Activated CD4-positive, alpha-beta T cell treated with anti-CD3 and anti-CD28 coated beads for 36 hours (primary cell): ENCODE measurements at regions of chr22 and their contacts with region 1.

Region 1: GRCh38 chr22:40856513-40857308 is at the starts of genes ST13 and XPNPEP3:
- DNase-seq: peak; percentile 98
- ATAC-seq: peak; percentile 96
- H3K4me3 Mint-ChIP-seq: peak within 1 kb of the TSS; percentile 97
- H3K27ac Mint-ChIP-seq: peak within 1 kb of the TSS; percentile 99
- H3K4me1 Mint-ChIP-seq: peaks cover 53% of the 10 kb centered on the region
- H3K27me3 Mint-ChIP-seq: no peaks in the 10 kb centered on the region
- total RNA-seq, gene ST13: 260 to 297 TPM
- total RNA-seq, gene XPNPEP3: 21.5 to 25.8 TPM

Region 2: DNA sequence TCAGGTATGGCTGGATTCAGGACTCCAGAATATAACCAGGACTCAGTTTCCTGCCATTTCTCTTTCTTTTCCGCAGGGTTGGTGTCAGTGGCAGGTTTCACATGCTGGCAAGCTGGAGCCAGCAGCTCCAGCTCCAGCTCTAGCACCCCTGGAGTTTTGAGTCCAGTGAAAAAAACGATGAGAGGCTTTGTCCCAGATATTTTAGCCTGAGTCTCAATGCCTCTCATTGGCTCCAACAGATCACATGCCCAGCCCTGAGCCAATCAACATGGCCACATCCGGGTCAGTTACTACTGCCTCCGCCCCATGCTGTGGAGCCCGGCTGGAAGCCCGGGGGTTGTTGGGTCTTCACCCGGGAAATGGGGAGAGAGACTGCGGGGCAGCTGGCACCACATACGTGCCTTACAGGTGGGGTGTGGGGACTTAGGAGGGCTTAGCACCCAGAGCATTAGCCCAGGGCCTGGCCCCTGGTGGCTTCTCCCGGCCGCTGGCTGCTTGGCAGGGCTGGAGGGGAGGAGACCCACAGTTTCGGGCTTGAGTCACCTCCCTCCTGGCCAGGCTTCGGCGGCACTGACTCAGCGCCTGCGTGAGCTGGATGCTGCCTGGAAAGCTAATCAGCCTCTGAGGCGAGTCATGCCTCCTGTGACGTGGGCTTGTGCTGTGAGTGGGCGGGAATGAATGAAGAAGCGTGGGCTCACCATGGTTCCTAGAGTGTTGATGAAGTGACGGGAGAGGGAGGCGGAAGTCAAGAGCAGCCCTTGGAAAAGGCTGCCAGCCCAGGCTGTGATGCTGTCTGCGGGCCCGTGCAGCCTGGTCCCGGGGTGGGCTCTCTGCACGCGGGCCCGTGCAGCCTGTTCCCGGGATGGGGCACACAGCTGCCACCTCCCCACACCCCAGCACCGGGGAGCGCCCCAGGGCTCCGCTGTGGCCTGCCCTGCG is 204.9 kb before region 1 on chr22:
- CTCF ChIA-PET with region 1: no interaction called
- POLR2A ChIA-PET with region 1: no interaction called
- intact Hi-C with region 1: loop called in 1 of 2 experiments (anchors 1 kb)
- DNase-seq: peak; percentile 97
- ATAC-seq: peak; percentile 99
- H3K4me3 Mint-ChIP-seq: peak overlapping the region; percentile 64
- H3K27ac Mint-ChIP-seq: peak overlapping the region; percentile 88
- H3K4me1 Mint-ChIP-seq: peaks cover 21% of the 10 kb centered on the region
- H3K27me3 Mint-ChIP-seq: no peaks in the 10 kb centered on the region

Region 3: GRCh38 chr22:40818747-40819598 is 37.7 kb before region 1 on chr22 and contains the start of gene SLC25A17:
- CTCF ChIA-PET with region 1: interaction called, 4 read pairs
- POLR2A ChIA-PET with region 1: interaction called, 3 read pairs
- intact Hi-C with region 1: loop called (anchors 1 kb)
- DNase-seq: peak; percentile 93
- ATAC-seq: peak; percentile 93
- H3K4me3 Mint-ChIP-seq: peak within 1 kb of the TSS; percentile 88
- H3K27ac Mint-ChIP-seq: peak within 1 kb of the TSS; percentile 92
- H3K4me1 Mint-ChIP-seq: peaks cover 30% of the 10 kb centered on the region
- H3K27me3 Mint-ChIP-seq: no peaks in the 10 kb centered on the region
- total RNA-seq, gene SLC25A17: 23.3 to 29.7 TPM

Region 4: DNA sequence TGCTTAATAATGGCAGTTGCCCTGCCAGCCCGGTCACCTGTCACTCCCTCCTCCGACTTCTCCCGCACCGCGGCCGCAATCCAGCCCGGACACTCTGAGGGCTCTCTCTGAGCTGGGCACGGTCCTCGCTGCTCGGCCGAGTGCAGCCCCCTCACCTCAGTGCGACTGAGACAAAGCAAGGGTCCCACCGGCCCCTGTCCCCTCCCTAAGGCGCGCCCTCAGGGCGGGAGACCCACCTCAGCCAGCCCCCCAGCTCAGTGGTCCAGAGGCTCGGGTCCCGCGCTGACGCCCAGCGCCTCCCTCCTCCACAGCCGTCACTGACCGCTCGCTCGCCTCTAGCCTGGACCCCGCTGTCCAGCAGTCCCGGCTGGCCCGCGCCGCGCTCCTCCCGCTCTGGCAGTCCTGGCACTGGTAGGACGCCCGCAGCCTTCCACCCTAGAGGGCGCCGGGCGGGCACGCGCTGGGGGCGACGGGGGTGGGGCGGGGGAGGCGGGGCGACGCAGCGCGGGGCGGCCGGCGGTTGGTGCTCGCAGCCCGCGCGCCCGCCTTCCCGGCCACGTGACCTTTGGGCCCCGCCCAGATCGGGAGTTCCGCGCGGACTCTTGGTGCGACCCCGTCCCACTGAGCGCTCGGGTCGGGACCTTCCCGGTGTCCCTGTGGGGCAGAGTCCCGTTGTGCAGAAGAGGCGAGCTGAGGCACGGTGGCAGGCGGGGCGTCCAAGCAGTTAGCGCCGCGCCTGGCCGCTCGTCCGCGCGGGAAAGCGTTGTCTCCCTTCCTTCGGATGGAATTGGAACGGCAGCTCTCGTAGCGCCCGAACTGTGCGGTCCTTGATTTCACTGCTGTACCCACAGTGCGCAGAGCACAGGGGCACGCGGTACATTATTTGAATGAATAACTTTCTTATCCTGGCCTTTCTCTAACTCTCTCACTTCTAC is 340.6 kb after region 1 on chr22:
- CTCF ChIA-PET with region 1: no interaction called
- POLR2A ChIA-PET with region 1: no interaction called
- intact Hi-C with region 1: loop called in 1 of 2 experiments (anchors 2 kb)
- DNase-seq: peak; percentile 89
- ATAC-seq: peak; percentile 82
- H3K4me3 Mint-ChIP-seq: peak overlapping the region; percentile 77
- H3K27ac Mint-ChIP-seq: no peak overlapping the region
- H3K4me1 Mint-ChIP-seq: peaks cover 11% of the 10 kb centered on the region
- H3K27me3 Mint-ChIP-seq: no peaks in the 10 kb centered on the region

Region 5: GRCh38 chr22:41425660-41426365 is 569.1 kb after region 1 on chr22:
- CTCF ChIA-PET with region 1: no interaction called
- POLR2A ChIA-PET with region 1: no interaction called
- intact Hi-C with region 1: no loop called
- DNase-seq: peak; percentile 72
- ATAC-seq: peak; percentile 90
- H3K4me3 Mint-ChIP-seq: no peak overlapping the region
- H3K27ac Mint-ChIP-seq: peak overlapping the region; percentile 79
- H3K4me1 Mint-ChIP-seq: peaks cover 14% of the 10 kb centered on the region
- H3K27me3 Mint-ChIP-seq: no peaks in the 10 kb centered on the region

Region 6: DNA sequence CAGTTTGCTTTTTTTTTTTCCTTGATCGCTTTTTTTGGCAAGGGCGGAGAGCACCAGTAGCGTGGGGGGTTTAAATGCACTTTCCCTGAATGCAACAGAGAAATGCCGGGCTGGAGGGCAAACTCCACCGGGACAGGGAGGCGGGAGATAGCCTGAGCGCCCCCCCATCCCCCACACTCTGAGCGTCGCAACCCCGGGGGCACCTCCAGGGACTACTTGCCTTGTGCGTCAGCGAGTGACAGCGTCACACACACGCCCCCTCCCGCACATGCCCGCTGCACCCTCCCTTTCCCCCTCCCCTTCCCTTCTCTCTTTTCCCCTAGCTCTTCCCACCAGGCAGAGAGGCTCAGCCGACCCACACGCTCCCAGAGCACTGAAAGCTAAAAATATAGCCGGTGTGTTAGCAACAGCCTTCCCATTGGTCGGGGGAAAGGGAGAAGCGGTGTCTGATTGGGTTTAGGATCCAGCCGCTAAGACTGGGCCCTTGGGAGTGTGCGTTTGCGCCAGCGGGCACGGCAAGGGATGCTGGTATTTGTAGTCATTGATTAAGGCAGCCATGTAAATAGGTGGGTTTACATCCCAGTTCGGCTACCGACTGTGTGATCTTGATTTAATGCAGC is 591.6 kb after region 1 on chr22:
- CTCF ChIA-PET with region 1: no interaction called
- POLR2A ChIA-PET with region 1: no interaction called
- intact Hi-C with region 1: loop called (anchors 1 to 5 kb)
- DNase-seq: peak; percentile 95
- ATAC-seq: peak; percentile 73
- H3K4me3 Mint-ChIP-seq: peak overlapping the region; percentile 86
- H3K27ac Mint-ChIP-seq: peak overlapping the region; percentile 97
- H3K4me1 Mint-ChIP-seq: peaks cover 8% of the 10 kb centered on the region
- H3K27me3 Mint-ChIP-seq: no peaks in the 10 kb centered on the region

Region 7: DNA sequence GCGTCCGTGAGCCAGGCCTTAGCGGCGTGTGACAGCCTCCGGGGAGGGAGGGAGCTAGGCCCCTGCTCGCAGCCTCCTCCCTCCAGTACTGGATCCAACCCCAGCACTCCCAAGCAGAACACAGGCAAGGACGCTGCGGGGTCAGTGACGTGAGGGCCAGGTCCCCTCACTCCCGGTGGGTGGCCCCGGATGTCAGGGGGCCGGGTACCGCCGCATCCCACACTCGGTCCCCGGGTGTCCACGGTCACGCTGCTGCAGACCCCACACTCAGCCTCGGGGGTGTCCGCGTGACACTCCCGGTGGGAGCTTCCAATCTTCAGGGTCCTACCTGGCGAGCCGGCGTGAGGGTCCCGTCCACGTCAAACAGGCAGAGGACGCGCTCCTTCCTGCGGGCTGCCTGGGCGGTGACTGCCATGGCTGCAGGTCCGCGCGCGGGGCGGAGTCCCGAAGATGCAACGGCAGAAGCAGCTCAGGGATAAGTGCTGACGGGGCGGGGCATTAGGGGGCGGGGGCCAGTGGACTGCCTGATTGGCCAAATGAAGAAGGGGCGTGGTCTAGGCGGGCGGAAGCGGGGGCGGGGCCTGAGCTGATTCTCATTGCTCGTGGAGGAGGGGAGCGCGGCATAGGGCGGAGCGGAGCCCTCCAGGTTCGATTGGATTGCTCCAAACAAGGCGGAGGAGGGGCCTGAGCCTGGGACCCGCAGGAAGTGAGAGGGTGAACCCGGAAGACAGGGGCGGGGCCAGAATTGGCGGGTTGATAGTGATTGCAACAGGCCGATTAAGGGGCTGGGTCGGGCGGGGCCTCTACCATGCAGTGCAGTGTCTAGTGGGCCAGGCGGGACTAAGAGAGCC is 732.9 kb after region 1 on chr22 and contains the start of gene PMM1:
- CTCF ChIA-PET with region 1: no interaction called
- POLR2A ChIA-PET with region 1: interaction called, 3 read pairs
- intact Hi-C with region 1: loop called in 1 of 2 experiments (anchors 1 kb)
- DNase-seq: peak; percentile 100
- ATAC-seq: peak; percentile 99
- H3K4me3 Mint-ChIP-seq: peak within 1 kb of the TSS; percentile 88
- H3K27ac Mint-ChIP-seq: peak within 1 kb of the TSS; percentile 85
- H3K4me1 Mint-ChIP-seq: peaks cover 15% of the 10 kb centered on the region
- H3K27me3 Mint-ChIP-seq: no peaks in the 10 kb centered on the region
- total RNA-seq, gene PMM1: 30.4 to 37.4 TPM